GM10248 (cell line): ENCODE measurements at regions of chr2 and their contacts with region 1.

Region 1: GRCh38 chr2:207143215-207144172 is 22.3 kb downstream of the KLF7 start:
- DNase-seq: no peak
- CTCF ChIP-seq: no peak

Region 2: DNA sequence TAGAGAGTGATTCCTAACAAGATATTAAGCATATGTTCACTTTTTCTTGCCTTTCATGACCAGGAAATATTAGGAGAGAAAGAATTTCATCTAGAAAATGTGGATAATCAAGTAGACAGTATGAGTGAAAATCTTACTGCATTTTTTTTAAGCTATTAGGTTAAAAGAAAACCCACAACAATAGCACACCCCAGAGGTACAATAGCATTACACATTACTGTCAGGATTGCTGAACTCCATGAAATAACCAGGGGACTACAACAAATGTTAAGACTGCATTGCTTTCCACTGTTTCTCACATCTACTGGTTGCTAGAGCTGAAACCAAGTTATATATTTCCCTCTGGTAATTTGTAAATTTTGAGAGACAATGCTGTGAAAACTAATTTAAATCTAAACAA is 11.5 kb before region 1 on chr2:
- CTCF ChIA-PET with region 1: interaction called, 22 read pairs
- POLR2A ChIA-PET with region 1: no interaction called
- DNase-seq: no peak
- CTCF ChIP-seq: no peak

Region 3: GRCh38 chr2:207156451-207157161 is 13.1 kb after region 1 on chr2:
- CTCF ChIA-PET with region 1: interaction called, 14 read pairs
- POLR2A ChIA-PET with region 1: no interaction called
- DNase-seq: no peak
- CTCF ChIP-seq: no peak

Region 4: GRCh38 chr2:207166039-207166348 is 22.5 kb after region 1 on chr2:
- CTCF ChIA-PET with region 1: interaction called, 9 read pairs
- POLR2A ChIA-PET with region 1: interaction called, 13 read pairs
- DNase-seq: peak; percentile 96
- CTCF ChIP-seq: no peak

Region 5: DNA sequence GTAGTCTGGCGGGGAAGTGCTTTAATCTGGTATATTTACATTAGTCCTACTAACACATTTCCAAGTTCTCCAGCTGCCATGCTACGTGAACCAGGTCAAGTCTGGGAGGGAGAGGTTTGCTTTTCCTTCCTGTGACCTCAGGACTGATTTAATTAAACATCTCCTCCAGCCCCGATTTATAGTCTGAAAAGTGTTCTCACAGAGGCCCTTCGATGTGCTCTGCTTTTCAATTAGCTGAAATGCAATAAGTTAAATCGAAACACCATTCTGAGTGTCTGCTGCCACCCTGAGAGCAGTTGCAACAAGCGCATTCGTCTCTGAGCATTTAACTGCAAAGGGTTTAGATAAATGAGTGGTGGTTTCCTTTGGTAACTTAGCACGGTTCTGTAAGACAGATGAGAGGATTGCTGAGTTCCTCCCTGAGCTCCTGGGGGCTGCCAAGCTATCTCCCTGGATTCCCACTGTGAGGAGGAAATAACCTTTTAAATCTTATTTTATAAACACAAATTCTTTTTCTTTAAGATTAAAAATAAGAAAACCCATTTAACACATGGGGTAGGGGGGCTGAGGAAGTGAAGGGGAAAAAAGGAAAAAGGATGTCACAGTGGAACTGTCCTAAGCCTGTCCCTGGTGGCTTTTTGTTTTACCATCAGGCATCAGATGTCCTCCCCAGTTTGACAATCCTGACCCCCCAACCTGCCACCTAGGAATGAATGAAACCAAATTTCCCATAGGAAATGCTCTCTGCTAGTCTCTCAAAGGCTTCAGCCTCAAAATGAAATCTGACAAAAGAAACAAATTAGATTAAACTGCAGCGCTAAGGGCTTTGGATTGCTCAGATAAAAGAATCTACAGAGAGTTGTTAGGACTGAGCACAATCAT is 329.8 kb after region 1 on chr2:
- CTCF ChIA-PET with region 1: interaction called, 21 read pairs
- POLR2A ChIA-PET with region 1: no interaction called
- DNase-seq: peak; percentile 30
- CTCF ChIP-seq: peak; percentile 77